Endothelial cell of umbilical vein (primary cell): ENCODE measurements at regions of chr2 and their contacts with region 1.

Region 1: DNA sequence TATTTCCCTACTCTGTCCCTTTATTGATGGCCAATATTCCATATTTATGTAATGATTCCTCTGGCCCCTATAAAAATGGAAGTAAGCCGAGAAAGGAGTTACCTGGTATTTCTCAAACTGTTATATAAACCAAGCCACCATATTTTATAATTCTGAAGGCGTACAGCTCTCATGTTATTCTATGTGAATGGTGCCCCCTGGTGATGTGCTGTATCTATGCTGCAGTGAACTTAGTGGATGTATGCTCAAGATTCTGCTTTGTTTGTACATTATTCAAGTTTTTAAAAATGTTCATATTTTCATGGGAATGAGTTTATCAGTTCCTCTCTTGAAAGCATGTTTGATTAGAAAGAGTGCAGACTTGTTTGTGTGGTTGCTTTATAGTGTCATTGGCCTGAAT is 194.5 kb upstream of the LRRTM1 start:
- DNase-seq: no peak
- H3K4me3 ChIP-seq: no peak overlapping the region
- H3K27ac ChIP-seq: no peak overlapping the region
- H3K4me1 ChIP-seq: no peaks in the 10 kb centered on the region
- H3K27me3 ChIP-seq: no peaks in the 10 kb centered on the region
- CTCF ChIP-seq: peak in 1 of 2 donors; percentile 15
- POLR2A ChIP-seq: no peak

Region 2: DNA sequence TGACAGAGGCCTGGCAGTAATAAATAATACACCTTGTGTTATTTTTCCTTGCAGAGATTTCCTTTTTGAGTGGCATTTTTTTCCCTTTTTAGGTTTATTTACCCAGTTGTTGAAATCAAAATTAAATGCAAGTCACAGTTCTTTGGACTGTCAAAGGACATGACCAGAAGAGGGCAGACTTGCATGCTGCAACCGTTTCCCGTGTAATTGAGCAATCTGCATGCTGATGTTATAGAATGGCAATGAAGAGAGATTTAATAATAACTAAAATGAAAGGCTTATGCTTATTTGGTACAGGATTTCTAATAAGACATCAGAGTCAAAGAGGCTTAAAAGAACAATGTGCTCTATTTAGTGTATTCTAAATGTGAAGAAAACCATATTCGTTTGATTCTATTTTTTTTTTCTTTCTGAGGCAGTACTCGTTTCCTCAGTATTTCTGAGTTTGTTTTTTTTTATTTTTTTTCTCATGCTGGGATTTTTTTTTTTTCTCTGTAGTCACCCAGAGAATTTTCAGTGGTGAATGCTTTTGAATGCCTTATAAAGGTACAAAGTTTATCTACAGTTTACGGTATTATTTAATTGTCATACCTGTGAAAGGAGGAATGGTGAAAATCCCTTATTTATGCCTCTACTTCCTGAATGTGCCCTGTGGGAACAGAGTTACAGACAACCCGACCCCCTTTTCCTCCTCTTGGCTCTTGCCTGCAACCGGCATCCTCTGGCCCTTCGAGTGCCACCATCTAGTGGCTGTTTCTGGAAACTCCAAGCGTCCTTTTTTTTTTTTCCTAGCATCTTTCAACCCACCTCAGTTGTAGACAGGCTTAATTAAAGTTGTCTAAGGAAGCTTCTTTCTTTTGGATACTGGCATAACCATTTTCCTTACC is 563.1 kb before region 1 on chr2:
- CTCF ChIA-PET with region 1: no interaction called
- POLR2A ChIA-PET with region 1: no interaction called
- dilution Hi-C with region 1: no loop called
- intact Hi-C with region 1: loop called (anchors 5 kb)
- DNase-seq: peak; percentile 12
- H3K4me3 ChIP-seq: no peak overlapping the region
- H3K27ac ChIP-seq: no peak overlapping the region
- H3K4me1 ChIP-seq: no peaks in the 10 kb centered on the region
- H3K27me3 ChIP-seq: no peaks in the 10 kb centered on the region
- CTCF ChIP-seq: peak in 1 of 2 donors; percentile 40
- POLR2A ChIP-seq: no peak

Region 3: DNA sequence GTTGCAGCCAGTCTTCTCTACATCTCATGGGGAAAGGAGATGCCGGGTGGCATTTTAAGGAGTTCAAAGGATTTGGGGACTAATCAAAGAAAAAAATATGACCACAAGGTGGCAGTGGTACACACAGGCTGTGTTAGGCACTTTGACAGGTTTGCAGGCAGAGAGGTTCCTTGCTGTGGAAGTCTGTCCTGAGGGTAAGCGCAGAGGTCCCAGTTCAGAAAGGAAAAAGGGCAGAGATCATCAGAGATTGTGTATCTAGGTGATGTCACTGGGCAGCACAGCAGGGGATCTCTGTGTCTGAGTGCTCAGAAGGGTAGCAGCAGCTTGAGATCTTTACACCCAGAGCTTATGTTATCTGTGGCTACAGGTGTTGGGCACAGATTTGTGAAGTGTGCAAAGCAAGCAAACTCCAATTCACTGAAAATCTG is 425.9 kb before region 1 on chr2:
- CTCF ChIA-PET with region 1: interaction called, 21 read pairs
- POLR2A ChIA-PET with region 1: no interaction called
- dilution Hi-C with region 1: no loop called
- intact Hi-C with region 1: no loop called
- DNase-seq: peak; percentile 16
- H3K4me3 ChIP-seq: no peak overlapping the region
- H3K27ac ChIP-seq: no peak overlapping the region
- H3K4me1 ChIP-seq: no peaks in the 10 kb centered on the region
- H3K27me3 ChIP-seq: no peaks in the 10 kb centered on the region
- CTCF ChIP-seq: peak; percentile 31 to 44
- POLR2A ChIP-seq: no peak

Region 4: GRCh38 chr2:80326214-80326613 is 172.9 kb before region 1 on chr2:
- CTCF ChIA-PET with region 1: interaction called, 10 read pairs
- POLR2A ChIA-PET with region 1: no interaction called
- dilution Hi-C with region 1: no loop called
- intact Hi-C with region 1: loop called (anchors 1 kb)
- DNase-seq: no peak
- H3K4me3 ChIP-seq: no peak overlapping the region
- H3K27ac ChIP-seq: no peak overlapping the region
- H3K4me1 ChIP-seq: no peaks in the 10 kb centered on the region
- H3K27me3 ChIP-seq: no peaks in the 10 kb centered on the region
- CTCF ChIP-seq: no peak
- POLR2A ChIP-seq: no peak